ENCODE measurements at regions of chr7 and their contacts with region 1.

Region 1: DNA sequence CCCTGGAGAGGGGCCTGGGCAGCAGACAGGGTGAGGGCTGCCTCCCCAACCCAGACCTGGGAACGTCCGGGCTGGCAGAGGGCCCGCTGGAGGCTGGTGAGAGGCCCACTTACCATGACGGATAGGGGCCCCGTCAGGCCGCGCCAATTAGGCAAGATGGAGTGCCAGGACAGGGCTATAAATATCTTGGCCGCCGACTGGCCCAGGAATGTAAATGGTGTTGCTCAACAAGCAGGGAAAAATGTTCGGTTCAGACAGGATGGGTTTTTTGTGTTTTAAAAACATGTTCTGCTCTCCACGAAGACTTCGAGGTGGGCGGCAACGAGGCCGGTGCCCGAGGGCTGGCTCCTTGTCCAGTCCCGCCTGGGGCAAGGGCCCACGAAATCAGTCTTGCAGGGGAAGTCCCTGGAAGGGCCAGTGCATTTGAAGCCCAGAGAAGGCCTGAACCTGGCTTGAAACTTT is 35.8 kb upstream of the ELN start:
- DNase-seq: peak; percentile 82 to 97
- H3K4me3 ChIP-seq: no peak overlapping the region
- H3K27ac ChIP-seq: peak overlapping the region; percentile 94
- H3K4me1 ChIP-seq: peaks cover 12 to 65% of the 10 kb centered on the region in 2 donors
- H3K27me3 ChIP-seq: no peaks in the 10 kb centered on the region
- CTCF ChIP-seq: no peak

Region 2: DNA sequence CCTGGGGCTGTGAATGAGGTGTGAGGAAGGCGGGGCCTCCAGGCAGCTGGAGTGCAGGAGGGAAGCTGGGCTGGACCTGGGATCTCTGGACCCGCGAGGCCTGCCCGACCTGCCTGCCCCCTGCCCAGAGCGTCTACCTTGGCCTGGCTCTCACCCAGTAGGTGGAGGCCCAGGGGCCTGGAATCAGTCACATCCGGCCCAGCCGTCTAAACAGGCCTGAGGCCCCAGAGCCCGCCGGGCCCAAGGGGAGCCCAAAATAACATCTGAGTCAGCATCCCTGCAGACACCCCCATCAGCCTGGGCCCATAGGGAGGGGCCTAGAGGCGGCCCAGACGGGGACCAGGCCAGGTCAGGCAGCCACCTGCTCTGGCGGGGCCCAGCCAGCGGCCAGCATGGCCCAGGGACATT is 20.7 kb after region 1 on chr7:
- intact Hi-C with region 1: loop called (anchors 2 kb)
- DNase-seq: peak; percentile 77 to 92
- H3K4me3 ChIP-seq: peak overlapping the region in 1 of 2 donors; percentile 7
- H3K27ac ChIP-seq: peak overlapping the region; percentile 88 to 94
- H3K4me1 ChIP-seq: peaks cover 22 to 56% of the 10 kb centered on the region in 2 donors
- H3K27me3 ChIP-seq: no peaks in the 10 kb centered on the region
- CTCF ChIP-seq: no peak

Region 3: DNA sequence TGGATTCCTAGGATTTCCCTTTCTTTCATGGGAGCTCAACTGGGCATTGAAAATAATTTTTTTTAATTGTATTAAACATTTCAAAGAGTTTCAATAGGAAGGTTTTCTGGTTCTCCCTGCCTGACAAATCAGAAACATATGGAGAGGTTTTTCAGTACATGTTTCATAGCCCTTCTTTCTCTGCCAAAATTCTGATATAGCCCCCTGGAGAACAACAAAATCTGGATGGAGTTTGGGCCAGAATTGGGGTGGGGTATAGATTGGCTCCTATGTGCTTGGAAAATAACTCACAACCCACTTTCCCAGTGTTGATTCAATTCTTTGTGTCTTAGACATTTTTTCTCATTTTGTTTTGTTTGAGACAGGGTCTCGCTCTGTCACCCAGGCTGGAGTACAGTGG is 157.5 kb after region 1 on chr7:
- intact Hi-C with region 1: no loop called
- DNase-seq: no peak
- H3K4me3 ChIP-seq: no peak overlapping the region
- H3K27ac ChIP-seq: no peak overlapping the region
- H3K4me1 ChIP-seq: no peaks in the 10 kb centered on the region
- H3K27me3 ChIP-seq: no peaks in the 10 kb centered on the region
- CTCF ChIP-seq: no peak

Measured in ascending aorta (tissue), 2 donors.